Calu3 (cell line): ENCODE measurements at regions of chr17 and their contacts with region 1.

Region 1: GRCh38 chr17:40536295-40537171 is 28.7 kb downstream of the CCR7 start:
- DNase-seq: peak; percentile 68
- H3K4me3 Mint-ChIP-seq: no peak overlapping the region
- H3K27ac Mint-ChIP-seq: no peak overlapping the region
- H3K4me1 Mint-ChIP-seq: peaks cover 24% of the 10 kb centered on the region
- H3K27me3 Mint-ChIP-seq: peaks cover 85% of the 10 kb centered on the region
- CTCF ChIP-seq: no peak

Region 2: GRCh38 chr17:40516581-40517285 is 19.8 kb before region 1 on chr17:
- CTCF ChIA-PET with region 1: interaction called, 1,743 read pairs
- intact Hi-C with region 1: no loop called
- DNase-seq: peak; percentile 94
- H3K4me3 Mint-ChIP-seq: no peak overlapping the region
- H3K27ac Mint-ChIP-seq: peak overlapping the region; percentile 1
- H3K4me1 Mint-ChIP-seq: peaks cover 65% of the 10 kb centered on the region
- H3K27me3 Mint-ChIP-seq: peaks cover 26% of the 10 kb centered on the region
- CTCF ChIP-seq: no peak